ENCODE measurements at regions of chr9 and their contacts with region 1.

Region 1: GRCh38 chr9:20941174-20941690 is 90.2 kb downstream of the HACD4 start:
- DNase-seq: peak; percentile 51
- H3K4me3 Mint-ChIP-seq: no peak overlapping the region
- H3K27ac Mint-ChIP-seq: no peak overlapping the region
- H3K4me1 Mint-ChIP-seq: peaks cover 3% of the 10 kb centered on the region
- H3K27me3 Mint-ChIP-seq: no peaks in the 10 kb centered on the region

Region 2: DNA sequence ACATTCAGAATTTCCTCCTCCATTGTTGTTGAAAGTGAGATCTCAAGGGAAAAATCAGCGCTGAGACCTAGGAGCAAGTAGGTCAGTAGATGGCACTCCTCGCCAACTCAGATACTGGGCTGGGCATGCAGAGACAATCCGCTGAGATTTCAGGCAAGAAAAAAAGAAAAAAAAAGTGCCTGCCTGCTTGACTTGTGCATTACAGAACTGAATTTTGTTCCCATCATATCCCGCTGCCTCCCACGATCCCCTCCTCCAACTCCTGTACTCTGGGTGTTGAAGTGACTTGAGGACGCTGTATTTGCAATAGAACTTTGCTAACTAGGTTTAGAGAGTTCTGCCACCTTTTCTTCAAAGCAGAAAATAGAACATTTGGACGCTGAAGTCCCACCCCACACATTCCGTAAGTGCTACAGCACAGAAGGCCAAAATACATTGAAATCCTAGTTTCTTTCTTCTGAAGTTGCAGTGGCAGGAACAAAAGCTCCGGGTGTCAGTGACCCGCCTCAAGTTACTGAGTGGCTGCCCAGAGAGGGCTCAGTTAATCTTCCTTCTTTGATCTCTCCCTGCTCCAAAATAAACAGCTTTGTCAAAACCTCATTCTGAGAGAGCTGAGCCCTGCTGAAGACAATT is 584.7 kb before region 1 on chr9:
- CTCF ChIA-PET with region 1: interaction called, 10 read pairs
- POLR2A ChIA-PET with region 1: no interaction called
- DNase-seq: peak; percentile 51
- H3K4me3 Mint-ChIP-seq: no peak overlapping the region
- H3K27ac Mint-ChIP-seq: no peak overlapping the region
- H3K4me1 Mint-ChIP-seq: peaks cover 65% of the 10 kb centered on the region
- H3K27me3 Mint-ChIP-seq: no peaks in the 10 kb centered on the region

Region 3: GRCh38 chr9:20884985-20885593 is 56.1 kb before region 1 on chr9:
- CTCF ChIA-PET with region 1: interaction called, 31 read pairs
- POLR2A ChIA-PET with region 1: no interaction called
- DNase-seq: peak; percentile 63
- H3K4me3 Mint-ChIP-seq: no peak overlapping the region
- H3K27ac Mint-ChIP-seq: no peak overlapping the region
- H3K4me1 Mint-ChIP-seq: no peaks in the 10 kb centered on the region
- H3K27me3 Mint-ChIP-seq: no peaks in the 10 kb centered on the region

Region 4: DNA sequence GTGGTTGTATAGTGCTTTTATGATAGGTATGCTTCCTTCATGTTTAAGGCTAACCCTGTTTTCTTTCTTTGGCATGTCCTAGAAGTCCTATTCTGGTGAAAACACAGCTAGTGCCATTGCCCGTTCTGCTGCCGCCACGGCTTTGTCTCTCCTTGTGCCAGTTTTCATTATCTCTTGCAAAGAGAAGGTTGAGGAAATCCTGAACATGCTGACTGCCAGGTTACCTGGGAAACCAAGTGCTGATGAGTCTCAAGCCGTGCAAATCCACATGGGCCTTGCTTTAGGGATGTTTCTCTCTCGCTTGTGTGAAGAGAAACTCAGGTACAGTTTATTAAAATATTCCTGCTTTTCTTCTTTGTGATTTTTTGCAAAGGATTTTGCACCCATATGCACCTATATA is 12.0 kb before region 1 on chr9:
- CTCF ChIA-PET with region 1: interaction called, 21 read pairs
- POLR2A ChIA-PET with region 1: no interaction called
- DNase-seq: no peak
- H3K4me3 Mint-ChIP-seq: no peak overlapping the region
- H3K27ac Mint-ChIP-seq: no peak overlapping the region
- H3K4me1 Mint-ChIP-seq: peaks cover 26% of the 10 kb centered on the region
- H3K27me3 Mint-ChIP-seq: no peaks in the 10 kb centered on the region

Region 5: DNA sequence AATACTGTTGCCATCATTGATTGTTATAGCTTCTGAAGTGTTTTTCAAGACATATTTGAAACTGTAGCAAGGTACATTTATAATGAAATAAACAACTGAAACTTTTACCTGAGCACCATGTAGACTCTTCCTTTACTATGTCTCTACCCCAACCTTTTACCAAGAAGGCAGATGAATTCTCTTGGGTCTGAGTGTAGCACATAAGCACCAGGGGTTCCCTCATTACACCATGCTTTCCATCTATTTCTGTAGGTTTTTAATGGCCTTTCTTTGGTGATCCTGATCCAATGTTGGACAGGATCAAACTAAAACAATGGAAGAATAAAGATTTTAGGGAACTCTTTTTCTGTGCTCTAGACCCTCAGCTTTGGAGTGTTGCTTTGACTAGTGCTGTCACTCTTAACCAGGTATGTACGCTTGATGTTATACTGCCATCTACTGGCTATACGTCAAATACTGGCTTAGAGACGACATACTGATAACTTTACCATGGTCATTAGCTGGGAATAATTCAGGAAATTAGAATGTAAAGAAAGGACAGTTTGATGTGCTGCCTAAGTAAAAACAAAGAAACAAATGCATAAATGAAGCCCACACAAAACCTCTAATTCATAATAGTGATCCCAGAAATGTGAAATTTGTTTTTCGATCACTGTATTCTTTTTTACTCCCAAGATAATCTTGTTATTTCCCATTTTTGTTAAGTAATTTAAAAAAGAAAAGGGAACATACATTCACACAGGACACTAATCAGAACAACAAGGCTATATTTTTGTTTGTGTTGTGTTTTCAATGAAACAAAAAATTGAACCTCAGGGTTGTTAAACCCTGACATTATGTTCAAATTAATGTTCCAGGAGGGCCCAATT is 169.7 kb after region 1 on chr9:
- CTCF ChIA-PET with region 1: interaction called, 36 read pairs
- POLR2A ChIA-PET with region 1: no interaction called
- DNase-seq: no peak
- H3K4me3 Mint-ChIP-seq: no peak overlapping the region
- H3K27ac Mint-ChIP-seq: no peak overlapping the region
- H3K4me1 Mint-ChIP-seq: no peaks in the 10 kb centered on the region
- H3K27me3 Mint-ChIP-seq: peaks cover 12% of the 10 kb centered on the region

Measured in activated CD4-positive, alpha-beta memory T cell treated with anti-CD3 and anti-CD28 coated beads, Interleukin-2, amount 10 ng/mL, durations not matched to agents 7 days and 5 days (primary cell).